Left ventricle myocardium inferior (tissue), 1 donor: ENCODE measurements at regions of chr21 and their contacts with region 1.

Region 1: GRCh38 chr21:15483138-15483780 is 246.5 kb upstream of the USP25 start:
- DNase-seq: peak; percentile 83
- H3K4me3 ChIP-seq: no peak overlapping the region
- H3K27ac ChIP-seq: no peak overlapping the region
- H3K4me1 ChIP-seq: peaks cover 4% of the 10 kb centered on the region
- H3K27me3 ChIP-seq: no peaks in the 10 kb centered on the region
- CTCF ChIP-seq: peak; percentile 97

Region 2: GRCh38 chr21:14864211-14865021 is 618.8 kb before region 1 on chr21:
- intact Hi-C with region 1: loop called (anchors 2 kb)
- DNase-seq: peak; percentile 64
- H3K4me3 ChIP-seq: no peak overlapping the region
- H3K27ac ChIP-seq: no peak overlapping the region
- H3K4me1 ChIP-seq: peaks cover 12% of the 10 kb centered on the region
- H3K27me3 ChIP-seq: no peaks in the 10 kb centered on the region
- CTCF ChIP-seq: peak; percentile 75

Region 3: DNA sequence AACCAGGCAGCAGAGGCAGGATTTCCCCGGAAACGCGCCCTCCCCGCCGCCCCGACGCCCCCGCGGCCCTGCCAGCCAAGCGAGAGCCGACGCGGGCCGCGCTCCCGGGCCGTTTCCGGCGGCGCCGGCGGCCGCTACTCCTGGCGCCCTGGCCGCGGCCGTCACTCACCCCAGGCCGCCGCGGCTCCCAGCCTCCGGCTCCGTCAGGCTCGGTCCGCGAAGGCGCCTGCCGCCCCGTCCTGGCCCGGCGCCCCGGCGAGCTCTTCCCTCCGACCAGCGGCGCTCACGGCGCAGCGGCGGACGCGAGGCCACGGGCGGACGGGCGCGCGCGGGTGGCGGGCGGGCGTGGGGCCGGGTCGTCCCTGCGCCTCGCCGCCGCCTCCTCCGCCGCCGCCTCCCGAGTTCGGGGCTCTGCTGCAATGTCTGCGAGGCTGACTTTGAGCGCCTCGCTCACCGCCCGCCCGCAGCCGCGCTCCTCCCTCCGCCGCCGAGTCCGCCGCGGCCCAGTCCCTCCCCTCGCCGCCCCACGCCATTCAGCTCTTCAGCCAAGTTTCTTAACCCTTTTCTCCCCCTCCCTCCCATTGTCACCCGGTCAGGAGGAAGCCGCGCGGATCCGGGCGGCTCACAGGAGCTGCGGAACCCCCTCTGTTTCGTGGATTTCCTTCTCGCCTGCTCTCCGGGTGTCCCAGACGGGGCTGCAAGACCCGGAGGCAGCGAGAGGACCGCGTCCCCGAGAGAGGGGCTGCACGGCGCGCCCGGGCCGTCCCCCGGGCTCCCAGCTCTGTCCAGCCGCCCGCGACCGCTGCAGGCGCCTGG is 418.5 kb before region 1 on chr21 and contains the start of gene NRIP1:
- intact Hi-C with region 1: loop called (anchors 5 kb)
- DNase-seq: peak; percentile 92
- H3K4me3 ChIP-seq: peak within 1 kb of the TSS; percentile 95
- H3K27ac ChIP-seq: peak within 1 kb of the TSS; percentile 97
- H3K4me1 ChIP-seq: peaks cover 62% of the 10 kb centered on the region
- H3K27me3 ChIP-seq: no peaks in the 10 kb centered on the region
- CTCF ChIP-seq: no peak
- total RNA-seq, gene NRIP1: 16.8 TPM

Region 4: GRCh38 chr21:15264084-15264665 is 219.1 kb before region 1 on chr21:
- intact Hi-C with region 1: no loop called
- DNase-seq: no peak
- H3K4me3 ChIP-seq: no peak overlapping the region
- H3K27ac ChIP-seq: no peak overlapping the region
- H3K4me1 ChIP-seq: no peaks in the 10 kb centered on the region
- H3K27me3 ChIP-seq: no peaks in the 10 kb centered on the region
- CTCF ChIP-seq: no peak

Region 5: DNA sequence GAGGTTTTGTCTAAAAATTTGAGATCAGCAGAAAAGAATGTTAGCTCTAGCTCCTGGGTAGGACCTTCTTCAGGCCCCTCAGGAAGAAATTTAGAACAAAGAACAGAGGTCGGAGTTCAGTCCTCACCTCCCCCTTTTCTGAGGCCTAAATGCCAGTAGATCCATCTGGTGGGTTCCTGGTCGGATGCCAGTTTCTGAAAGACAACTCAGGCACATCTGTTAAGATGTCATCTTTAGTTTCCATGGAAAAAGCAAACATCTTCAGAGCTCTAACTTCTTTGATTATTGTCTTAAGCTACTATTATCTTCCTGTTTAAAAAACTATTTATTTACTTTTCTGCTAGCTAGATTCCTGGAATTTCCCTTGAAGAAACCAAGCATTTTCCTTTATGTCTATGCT is 209.5 kb after region 1 on chr21:
- intact Hi-C with region 1: no loop called
- DNase-seq: no peak
- H3K4me3 ChIP-seq: no peak overlapping the region
- H3K27ac ChIP-seq: no peak overlapping the region
- H3K4me1 ChIP-seq: no peaks in the 10 kb centered on the region
- H3K27me3 ChIP-seq: peaks cover 12% of the 10 kb centered on the region
- CTCF ChIP-seq: no peak

Region 6: GRCh38 chr21:16198546-16198945 is 715.3 kb after region 1 on chr21:
- intact Hi-C with region 1: no loop called
- DNase-seq: no peak
- H3K4me3 ChIP-seq: no peak overlapping the region
- H3K27ac ChIP-seq: no peak overlapping the region
- H3K4me1 ChIP-seq: peaks cover 35% of the 10 kb centered on the region
- H3K27me3 ChIP-seq: no peaks in the 10 kb centered on the region
- CTCF ChIP-seq: no peak